Heart right ventricle (tissue), 16 donors: ENCODE measurements at regions of chr10 and their contacts with region 1.

Region 1: GRCh38 chr10:91367127-91367531 is 43.0 kb upstream of the HECTD2 start:
- DNase-seq: no peak
- ATAC-seq: peak in 6 of 8 donors; percentile 58 to 94 (median 81)
- H3K4me3 ChIP-seq: no peak overlapping the region
- H3K27ac ChIP-seq: peak overlapping the region in 1 of 10 donors; percentile 7
- H3K4me1 ChIP-seq: peaks cover 0 to 22% (median 0%) of the 10 kb centered on the region in 9 donors
- H3K27me3 ChIP-seq: peaks cover 0 to 14% (median 0%) of the 10 kb centered on the region in 7 donors
- CTCF ChIP-seq: no peak

Region 2: DNA sequence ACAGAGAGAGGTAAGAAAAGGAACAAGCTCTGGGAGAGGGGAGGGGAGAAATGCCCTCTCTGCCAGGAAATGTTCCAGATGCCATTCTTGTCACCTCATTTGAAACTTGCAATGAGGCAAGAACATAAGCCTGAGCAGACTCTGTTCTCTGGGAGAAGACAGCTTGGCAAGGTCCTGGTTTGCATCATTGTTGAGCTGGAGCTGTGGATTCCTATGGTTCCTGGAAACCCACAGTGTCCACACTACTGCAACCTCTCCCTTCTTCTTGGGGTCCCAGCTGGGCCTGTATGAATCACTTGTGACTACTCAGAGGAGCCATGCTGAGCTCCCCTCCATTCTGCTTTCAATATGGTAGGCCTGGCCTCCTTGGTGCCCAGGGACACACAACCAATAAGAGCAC is 17.7 kb before region 1 on chr10:
- intact Hi-C with region 1: loop called in 1 of 10 experiments (anchors 2 kb)
- DNase-seq: peak in 1 of 2 donors; percentile 16
- ATAC-seq: peak; percentile 58 to 96 (median 90)
- H3K4me3 ChIP-seq: no peak overlapping the region
- H3K27ac ChIP-seq: peak overlapping the region in 6 of 10 donors; percentile 30 to 75 (median 73)
- H3K4me1 ChIP-seq: peaks cover 0 to 26% (median 11%) of the 10 kb centered on the region in 9 donors
- H3K27me3 ChIP-seq: no peaks in the 10 kb centered on the region
- CTCF ChIP-seq: no peak